Sigmoid colon (tissue), 7 donors: ENCODE measurements at regions of chr17 and their contacts with region 1.

Region 1: DNA sequence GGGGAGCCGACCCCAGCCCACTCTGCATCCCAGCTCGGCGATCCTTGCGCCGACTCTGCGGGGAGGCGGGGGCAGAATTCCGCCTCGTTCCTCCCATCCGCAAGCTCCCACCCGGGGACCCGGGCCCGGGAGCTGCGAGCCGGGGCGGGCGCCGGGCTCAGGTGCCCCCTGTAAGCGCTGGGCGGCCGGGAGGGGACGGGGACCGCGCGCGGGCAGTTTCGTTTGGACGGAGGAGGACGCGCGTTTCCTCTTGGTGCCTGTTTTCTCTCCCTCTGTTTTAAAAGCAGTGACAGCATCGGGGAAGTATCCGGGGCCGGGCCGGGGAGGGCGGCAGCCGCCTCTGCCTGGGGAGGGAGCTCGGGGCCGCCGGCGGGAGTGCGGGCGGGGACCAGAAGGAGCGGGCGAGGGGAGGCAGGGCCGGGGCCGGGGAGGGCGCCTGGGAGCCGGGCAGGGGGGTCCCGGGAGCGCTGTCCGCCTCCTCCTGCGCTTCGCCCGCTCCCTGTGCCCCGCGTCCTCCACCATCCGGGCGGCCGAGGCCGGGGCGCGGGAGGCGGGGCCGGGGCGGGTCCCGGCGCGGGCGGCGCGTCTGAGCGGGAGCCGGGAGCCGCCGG is 57.0 kb downstream of the RAP1GAP2 start:
- DNase-seq: peak; percentile 80
- H3K4me3 ChIP-seq: peak overlapping the region; percentile 39 to 75 (median 68)
- H3K27ac ChIP-seq: peak overlapping the region; percentile 77 to 89 (median 86)
- H3K4me1 ChIP-seq: peaks cover 0 to 32% (median 26%) of the 10 kb centered on the region in 4 donors
- H3K27me3 ChIP-seq: no peaks in the 10 kb centered on the region
- CTCF ChIP-seq: no peak
- EP300 ChIP-seq: no peak
- POLR2A ChIP-seq: no peak

Region 2: GRCh38 chr17:2965563-2966235 is 112.5 kb after region 1 on chr17:
- intact Hi-C with region 1: loop called (anchors 2 kb)
- DNase-seq: peak; percentile 80
- H3K4me3 ChIP-seq: no peak overlapping the region
- H3K27ac ChIP-seq: peak overlapping the region in 3 of 4 donors; percentile 81 to 84 (median 83)
- H3K4me1 ChIP-seq: peaks cover 8 to 37% (median 32%) of the 10 kb centered on the region in 4 donors
- H3K27me3 ChIP-seq: no peaks in the 10 kb centered on the region
- CTCF ChIP-seq: no peak
- EP300 ChIP-seq: no peak
- POLR2A ChIP-seq: no peak

Region 3: GRCh38 chr17:2975469-2975958 is 122.3 kb after region 1 on chr17:
- intact Hi-C with region 1: loop called (anchors 2 kb)
- DNase-seq: peak; percentile 78
- H3K4me3 ChIP-seq: peak overlapping the region; percentile 42 to 55 (median 48)
- H3K27ac ChIP-seq: peak overlapping the region; percentile 51 to 73 (median 70)
- H3K4me1 ChIP-seq: peaks cover 0 to 4% (median 1%) of the 10 kb centered on the region in 4 donors
- H3K27me3 ChIP-seq: no peaks in the 10 kb centered on the region
- CTCF ChIP-seq: no peak
- EP300 ChIP-seq: no peak
- POLR2A ChIP-seq: no peak

Region 4: DNA sequence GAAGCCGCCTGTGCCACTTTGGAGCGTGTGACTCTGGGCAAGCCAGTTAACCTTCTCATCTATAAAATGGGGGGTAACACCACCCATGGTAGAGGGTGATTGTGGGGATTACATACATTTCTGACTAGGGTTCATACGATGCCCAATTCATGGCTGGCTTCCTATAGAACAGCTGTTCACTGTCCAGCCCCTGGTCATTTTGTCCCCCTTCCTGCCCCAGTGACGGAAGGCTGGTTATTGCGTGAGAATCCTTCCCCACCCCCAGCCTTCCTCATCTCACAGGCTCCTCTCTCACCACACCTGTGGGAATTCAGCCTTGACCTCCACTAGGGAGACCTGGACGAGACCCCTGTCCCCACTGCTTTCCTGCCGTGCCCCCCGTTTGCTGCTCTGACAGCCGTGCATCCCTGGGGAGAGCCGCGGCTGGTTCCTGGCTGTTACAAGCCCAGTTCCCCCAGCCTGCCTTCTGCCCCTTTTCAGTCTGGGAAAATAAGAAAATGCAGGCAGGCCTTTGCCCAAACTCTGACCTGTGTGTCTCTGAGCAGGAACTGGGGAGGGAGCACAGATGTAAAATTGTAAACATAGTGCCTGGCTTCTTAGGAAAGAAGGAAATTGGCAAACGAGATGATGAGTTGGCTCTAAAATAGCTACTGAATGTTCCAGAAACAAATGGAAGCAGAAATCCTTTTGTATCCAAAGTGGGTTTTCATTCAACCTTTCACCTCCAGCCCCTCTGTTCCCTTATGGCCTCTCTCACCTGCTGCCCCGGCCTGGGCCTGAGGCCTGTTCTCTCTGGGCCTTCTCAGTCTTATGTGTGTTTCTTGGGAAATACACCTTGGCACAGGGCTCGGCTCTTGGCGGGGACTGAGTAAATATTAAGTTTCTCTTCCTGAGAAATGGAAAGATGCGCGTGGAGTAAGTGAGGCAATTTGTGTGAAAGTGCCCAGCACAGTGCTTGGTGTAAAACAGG is 143.0 kb after region 1 on chr17:
- intact Hi-C with region 1: no loop called
- DNase-seq: peak; percentile 64
- H3K4me3 ChIP-seq: no peak overlapping the region
- H3K27ac ChIP-seq: peak overlapping the region; percentile 44 to 67 (median 54)
- H3K4me1 ChIP-seq: peaks cover 0 to 16% (median 9%) of the 10 kb centered on the region in 4 donors
- H3K27me3 ChIP-seq: no peaks in the 10 kb centered on the region
- CTCF ChIP-seq: no peak
- EP300 ChIP-seq: no peak
- POLR2A ChIP-seq: no peak

Region 5: GRCh38 chr17:3030096-3030495 is 176.9 kb after region 1 on chr17:
- intact Hi-C with region 1: no loop called
- DNase-seq: no peak
- H3K4me3 ChIP-seq: no peak overlapping the region
- H3K27ac ChIP-seq: peak overlapping the region in 1 of 4 donors; percentile 39
- H3K4me1 ChIP-seq: no peaks in the 10 kb centered on the region
- H3K27me3 ChIP-seq: no peaks in the 10 kb centered on the region
- CTCF ChIP-seq: no peak
- EP300 ChIP-seq: no peak
- POLR2A ChIP-seq: no peak